GM12878 (cell line): ENCODE measurements at regions of chr5 and their contacts with region 1.

Region 1: DNA sequence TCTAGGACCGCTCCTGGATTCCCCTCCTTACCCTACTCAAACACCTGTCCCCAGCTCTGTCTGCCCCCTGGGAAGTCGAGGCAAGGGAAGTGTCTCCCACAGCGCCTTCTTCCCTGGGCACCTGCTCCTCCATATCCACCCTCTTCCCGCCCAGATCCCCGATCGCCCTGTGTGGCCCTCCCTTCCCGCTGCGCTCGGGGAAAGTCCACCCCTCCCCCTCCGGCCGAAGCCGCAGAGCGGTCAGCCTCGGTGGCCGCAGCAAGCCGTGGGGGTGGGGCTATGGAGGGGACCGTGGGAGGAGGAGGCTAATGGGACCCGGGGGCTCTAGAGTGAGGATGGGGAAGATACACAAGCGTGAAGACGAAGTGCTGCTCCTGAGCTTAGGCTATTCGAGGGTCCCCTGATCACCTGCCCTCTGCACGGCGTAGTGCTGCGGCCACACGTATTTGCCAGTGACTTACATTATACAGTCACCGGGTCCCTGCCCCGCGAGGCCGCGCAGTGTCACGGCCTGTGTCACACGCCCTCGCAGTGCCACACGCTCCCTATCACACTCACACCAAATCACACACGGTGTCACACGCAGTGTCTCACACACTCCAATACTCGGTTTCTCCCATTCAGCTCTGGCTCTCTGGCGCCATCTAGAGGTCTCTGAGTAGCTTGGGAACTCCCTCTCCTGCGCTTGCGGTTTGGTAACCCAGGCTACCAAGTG is 658 bp upstream of the PCDH1 start:
- DNase-seq: peak; percentile 71
- ATAC-seq: peak; percentile 89
- H3K4me3 ChIP-seq: peak overlapping the region; percentile 28; the same call in 1 of the 2 replicates
- H3K27ac ChIP-seq: no peak overlapping the region
- H3K4me1 ChIP-seq: peaks cover 37% of the 10 kb centered on the region
- H3K27me3 ChIP-seq: peaks cover 22 to 32% of the 10 kb centered on the region in 2 experiments
- CTCF ChIP-seq: peak; percentile 97 to 98 (median 97); a peak in 5 of 6 replicates
- EP300 ChIP-seq: no peak
- POLR2A ChIP-seq: no peak
- RAD21 ChIP-seq: peak; percentile 89

Region 2: DNA sequence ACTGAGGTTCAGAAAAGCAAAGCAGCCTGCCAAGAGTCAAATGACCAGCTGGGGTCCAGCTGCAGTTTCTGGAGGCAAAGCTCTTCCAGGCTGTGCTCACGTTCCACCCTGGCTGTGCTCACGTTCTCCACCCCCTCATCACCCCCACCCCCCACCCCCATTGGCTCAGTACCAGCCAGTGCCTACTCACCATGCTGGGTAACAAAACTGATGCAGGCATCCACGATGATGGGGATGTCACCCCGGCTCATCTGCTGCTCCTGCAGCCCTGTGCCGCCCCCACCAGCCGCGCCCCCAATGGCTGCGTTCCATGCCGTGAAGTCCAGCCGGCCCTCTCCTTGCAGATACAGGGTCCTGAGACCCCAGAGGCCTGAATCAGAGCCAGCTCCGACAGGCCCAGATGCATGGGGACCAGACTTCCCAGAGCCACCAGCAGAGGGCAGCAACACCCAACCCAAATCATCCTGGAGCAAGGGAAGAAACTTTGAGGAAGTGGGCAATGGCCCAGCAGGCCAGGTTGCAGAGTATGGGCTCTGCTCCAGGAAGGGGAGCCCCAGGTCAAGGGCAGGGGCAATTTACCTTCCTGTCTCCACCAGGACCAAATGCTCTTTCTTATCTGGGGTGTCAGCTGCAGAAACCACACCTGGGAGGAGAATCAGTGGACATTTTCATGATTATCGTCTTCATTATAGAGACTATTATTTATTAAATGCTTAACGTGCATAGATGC is 214.0 kb before region 1 on chr5:
- CTCF ChIA-PET with region 1: interaction called, 10 read pairs
- POLR2A ChIA-PET with region 1: no interaction called
- RAD21 ChIA-PET with region 1: no interaction called
- SMC1A ChIA-PET with region 1: no interaction called
- in situ Hi-C with region 1: no loop called
- intact Hi-C with region 1: no loop called
- DNase-seq: peak; percentile 31
- ATAC-seq: peak; percentile 100
- H3K4me3 ChIP-seq: no peak overlapping the region
- H3K27ac ChIP-seq: no peak overlapping the region
- H3K4me1 ChIP-seq: no peaks in the 10 kb centered on the region
- H3K27me3 ChIP-seq: no peaks in the 10 kb centered on the region
- CTCF ChIP-seq: peak; percentile 92 to 96 (median 94)
- EP300 ChIP-seq: no peak
- POLR2A ChIP-seq: no peak
- RAD21 ChIP-seq: peak; percentile 84

Region 3: DNA sequence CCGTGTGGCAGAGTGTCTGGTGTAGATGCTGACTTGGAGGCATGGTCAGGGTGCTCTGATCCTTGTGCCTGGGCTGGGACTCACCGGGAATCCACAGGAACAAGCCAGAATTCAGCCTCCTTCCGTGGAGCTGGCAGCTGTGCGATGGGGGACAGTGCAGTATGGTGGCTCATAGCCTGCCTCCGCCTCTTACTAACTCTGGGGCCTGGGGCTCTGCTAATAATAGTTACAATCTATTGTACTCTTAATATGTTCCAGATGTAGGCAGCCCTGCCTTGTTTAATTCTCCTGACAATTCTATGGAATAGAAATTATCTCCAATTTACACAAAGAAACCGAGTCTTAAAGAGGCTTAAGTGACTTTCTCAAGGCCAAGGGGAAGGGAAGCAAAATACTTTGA is 78.3 kb before region 1 on chr5:
- CTCF ChIA-PET with region 1: interaction called, 12 read pairs
- POLR2A ChIA-PET with region 1: no interaction called
- RAD21 ChIA-PET with region 1: no interaction called
- SMC1A ChIA-PET with region 1: no interaction called
- in situ Hi-C with region 1: no loop called
- intact Hi-C with region 1: no loop called
- DNase-seq: no peak
- ATAC-seq: no peak
- H3K4me3 ChIP-seq: no peak overlapping the region
- H3K27ac ChIP-seq: no peak overlapping the region
- H3K4me1 ChIP-seq: no peaks in the 10 kb centered on the region
- H3K27me3 ChIP-seq: peaks cover 3 to 9% of the 10 kb centered on the region in 2 experiments
- CTCF ChIP-seq: no peak
- EP300 ChIP-seq: no peak
- POLR2A ChIP-seq: no peak
- RAD21 ChIP-seq: no peak

Region 4: DNA sequence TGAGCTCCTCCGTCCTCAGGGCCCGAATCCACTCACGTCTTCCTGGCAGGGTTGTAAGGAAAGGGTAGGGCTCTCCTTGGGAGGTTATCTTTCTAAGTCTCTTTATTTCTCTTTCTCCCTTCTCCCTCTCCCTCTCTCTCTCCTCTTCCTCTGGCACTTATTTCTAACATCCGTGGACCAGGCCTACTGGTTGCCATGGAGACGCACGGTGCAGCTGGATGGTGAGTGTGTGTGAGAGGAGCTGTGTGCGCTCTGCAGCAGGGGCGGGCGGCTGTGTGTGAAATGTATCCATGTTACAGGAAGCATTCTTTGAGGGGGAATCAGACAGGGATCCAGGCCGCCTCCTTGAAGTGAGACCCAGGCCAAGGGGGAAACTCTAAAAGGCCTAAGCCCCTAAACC is 32.8 kb before region 1 on chr5:
- CTCF ChIA-PET with region 1: interaction called, 13 read pairs
- POLR2A ChIA-PET with region 1: interaction called, 3 read pairs
- RAD21 ChIA-PET with region 1: interaction called, 3 read pairs
- SMC1A ChIA-PET with region 1: interaction called, 3 read pairs
- in situ Hi-C with region 1: no loop called
- intact Hi-C with region 1: no loop called
- DNase-seq: no peak
- ATAC-seq: no peak
- H3K4me3 ChIP-seq: no peak overlapping the region
- H3K27ac ChIP-seq: no peak overlapping the region
- H3K4me1 ChIP-seq: peaks cover 8% of the 10 kb centered on the region
- H3K27me3 ChIP-seq: no peaks in the 10 kb centered on the region; a peak in 2 of 4 replicates
- CTCF ChIP-seq: no peak
- EP300 ChIP-seq: no peak
- POLR2A ChIP-seq: no peak
- RAD21 ChIP-seq: no peak

Region 5: GRCh38 chr5:141968914-141969608 is 90.2 kb after region 1 on chr5 and contains the start of gene RNF14:
- CTCF ChIA-PET with region 1: interaction called, 29 read pairs
- POLR2A ChIA-PET with region 1: interaction called, 4 read pairs
- RAD21 ChIA-PET with region 1: interaction called, 6 read pairs
- SMC1A ChIA-PET with region 1: interaction called, 5 read pairs
- in situ Hi-C with region 1: no loop called
- intact Hi-C with region 1: no loop called
- DNase-seq: peak; percentile 74
- ATAC-seq: peak; percentile 95
- H3K4me3 ChIP-seq: peak within 1 kb of the TSS; percentile 73
- H3K27ac ChIP-seq: peak within 1 kb of the TSS; percentile 96
- H3K4me1 ChIP-seq: peaks cover 8% of the 10 kb centered on the region
- H3K27me3 ChIP-seq: no peaks in the 10 kb centered on the region
- CTCF ChIP-seq: peak; percentile 84 to 98 (median 95)
- EP300 ChIP-seq: no peak
- POLR2A ChIP-seq: peak; percentile 97
- RAD21 ChIP-seq: no peak
- polyA plus RNA-seq, gene RNF14: 28.1 to 34.4 TPM